ENCODE measurements at regions of chr11 and their contacts with region 1.

Region 1: GRCh38 chr11:19951558-19952115 is 208.6 kb downstream of the DBX1 start:
- DNase-seq: no peak
- ATAC-seq: peak in 2 of 4 donors; percentile 26 to 39
- H3K4me3 ChIP-seq: peak overlapping the region in 4 of 12 donors; percentile 8 to 43 (median 26)
- H3K27ac ChIP-seq: peak overlapping the region in 5 of 12 donors; percentile 2 to 44 (median 30)
- H3K4me1 ChIP-seq: peaks cover 5 to 57% (median 27%) of the 10 kb centered on the region in 12 donors
- H3K27me3 ChIP-seq: no peaks in the 10 kb centered on the region
- CTCF ChIP-seq: peak; percentile 50 to 76 (median 70)
- POLR2A ChIP-seq: no peak

Region 2: DNA sequence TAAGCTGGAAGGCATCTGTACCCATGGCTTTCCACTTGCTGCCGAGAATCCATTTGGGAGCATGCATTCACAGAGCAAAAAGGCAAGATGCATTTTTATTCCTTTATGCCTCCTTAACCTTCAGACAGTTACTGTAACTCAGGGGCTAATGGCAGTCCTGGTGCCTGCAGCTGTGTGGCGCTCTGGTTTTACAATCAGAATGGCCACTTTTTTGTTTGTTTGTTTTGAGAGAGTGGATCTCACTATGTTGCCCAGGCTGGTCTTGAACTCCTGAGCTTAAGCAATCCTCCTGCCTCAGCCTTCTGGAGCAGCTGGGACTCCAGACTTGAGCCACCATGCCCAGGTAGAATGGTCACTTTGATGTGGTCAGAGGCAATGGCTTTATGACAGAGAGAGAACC is 137.2 kb before region 1 on chr11:
- intact Hi-C with region 1: no loop called
- DNase-seq: no peak
- ATAC-seq: no peak
- H3K4me3 ChIP-seq: no peak overlapping the region
- H3K27ac ChIP-seq: peak overlapping the region in 1 of 12 donors; percentile 75
- H3K4me1 ChIP-seq: peaks cover 0 to 76% (median 40%) of the 10 kb centered on the region in 12 donors
- H3K27me3 ChIP-seq: no peaks in the 10 kb centered on the region
- CTCF ChIP-seq: no peak
- POLR2A ChIP-seq: no peak

Region 3: DNA sequence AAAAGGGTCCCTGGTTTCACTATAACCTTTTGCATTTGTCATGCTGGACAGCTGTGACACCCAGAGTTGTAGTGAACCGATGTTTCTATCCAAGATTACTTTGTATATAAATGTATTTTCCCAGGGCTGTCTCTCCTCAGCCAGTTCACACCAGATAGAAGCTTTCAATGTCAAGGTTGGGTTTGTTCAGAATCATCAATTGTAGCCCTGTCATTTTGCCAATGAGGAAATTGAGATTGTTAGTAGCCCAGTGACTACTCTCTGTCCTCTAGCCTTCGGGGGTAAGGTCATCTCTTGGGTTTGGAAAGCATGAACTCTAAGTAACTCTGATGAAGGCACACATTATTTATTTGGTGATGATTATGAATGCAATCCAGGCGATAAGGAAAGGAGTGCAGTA is 43.0 kb after region 1 on chr11:
- intact Hi-C with region 1: loop called in 1 of 10 experiments (anchors 5 kb)
- DNase-seq: no peak
- ATAC-seq: no peak
- H3K4me3 ChIP-seq: no peak overlapping the region
- H3K27ac ChIP-seq: peak overlapping the region in 9 of 12 donors; percentile 9 to 72 (median 37)
- H3K4me1 ChIP-seq: peaks cover 0 to 27% (median 12%) of the 10 kb centered on the region in 12 donors
- H3K27me3 ChIP-seq: no peaks in the 10 kb centered on the region
- CTCF ChIP-seq: no peak
- POLR2A ChIP-seq: no peak

Region 4: GRCh38 chr11:20042118-20042518 is 90.5 kb after region 1 on chr11:
- intact Hi-C with region 1: loop called in 4 of 10 experiments (anchors 5 to 10 kb)
- DNase-seq: no peak
- ATAC-seq: no peak
- H3K4me3 ChIP-seq: no peak overlapping the region
- H3K27ac ChIP-seq: peak overlapping the region in 7 of 12 donors; percentile 6 to 61 (median 17)
- H3K4me1 ChIP-seq: peaks cover 0 to 50% (median 15%) of the 10 kb centered on the region in 12 donors
- H3K27me3 ChIP-seq: no peaks in the 10 kb centered on the region
- CTCF ChIP-seq: no peak
- POLR2A ChIP-seq: no peak

Region 5: DNA sequence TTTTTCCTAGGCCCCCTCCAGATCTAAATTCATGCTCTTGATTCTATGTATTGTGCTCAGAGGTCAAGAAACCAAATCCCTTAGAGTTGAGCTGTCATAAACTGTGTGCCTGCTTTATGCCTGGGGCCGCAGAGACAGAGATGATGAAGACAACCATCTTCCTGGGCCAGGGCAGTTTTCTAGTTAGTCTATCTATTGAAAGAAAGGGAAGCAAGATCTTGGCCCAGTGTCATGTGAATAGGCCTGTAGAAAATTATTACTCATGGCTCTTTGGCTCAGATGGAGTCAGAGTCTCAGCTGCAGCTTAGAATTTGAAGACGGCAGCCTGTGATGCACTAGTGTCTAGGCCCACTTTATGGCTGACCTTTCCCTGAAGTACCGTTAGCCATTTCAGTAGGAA is 96.6 kb after region 1 on chr11:
- intact Hi-C with region 1: loop called in 4 of 10 experiments (anchors 5 to 10 kb)
- DNase-seq: no peak
- ATAC-seq: peak in 2 of 4 donors; percentile 1 to 4
- H3K4me3 ChIP-seq: peak overlapping the region; percentile 7 to 65 (median 48)
- H3K27ac ChIP-seq: peak overlapping the region; percentile 69 to 96 (median 88)
- H3K4me1 ChIP-seq: peaks cover 0 to 53% (median 15%) of the 10 kb centered on the region in 12 donors
- H3K27me3 ChIP-seq: no peaks in the 10 kb centered on the region
- CTCF ChIP-seq: no peak
- POLR2A ChIP-seq: no peak

Region 6: GRCh38 chr11:20097319-20098221 is 145.9 kb after region 1 on chr11:
- intact Hi-C with region 1: no loop called
- DNase-seq: no peak
- ATAC-seq: no peak
- H3K4me3 ChIP-seq: no peak overlapping the region
- H3K27ac ChIP-seq: peak overlapping the region in 2 of 12 donors; percentile 22 to 42
- H3K4me1 ChIP-seq: peaks cover 0 to 11% (median 0%) of the 10 kb centered on the region in 12 donors
- H3K27me3 ChIP-seq: no peaks in the 10 kb centered on the region
- CTCF ChIP-seq: no peak
- POLR2A ChIP-seq: no peak

Region 7: DNA sequence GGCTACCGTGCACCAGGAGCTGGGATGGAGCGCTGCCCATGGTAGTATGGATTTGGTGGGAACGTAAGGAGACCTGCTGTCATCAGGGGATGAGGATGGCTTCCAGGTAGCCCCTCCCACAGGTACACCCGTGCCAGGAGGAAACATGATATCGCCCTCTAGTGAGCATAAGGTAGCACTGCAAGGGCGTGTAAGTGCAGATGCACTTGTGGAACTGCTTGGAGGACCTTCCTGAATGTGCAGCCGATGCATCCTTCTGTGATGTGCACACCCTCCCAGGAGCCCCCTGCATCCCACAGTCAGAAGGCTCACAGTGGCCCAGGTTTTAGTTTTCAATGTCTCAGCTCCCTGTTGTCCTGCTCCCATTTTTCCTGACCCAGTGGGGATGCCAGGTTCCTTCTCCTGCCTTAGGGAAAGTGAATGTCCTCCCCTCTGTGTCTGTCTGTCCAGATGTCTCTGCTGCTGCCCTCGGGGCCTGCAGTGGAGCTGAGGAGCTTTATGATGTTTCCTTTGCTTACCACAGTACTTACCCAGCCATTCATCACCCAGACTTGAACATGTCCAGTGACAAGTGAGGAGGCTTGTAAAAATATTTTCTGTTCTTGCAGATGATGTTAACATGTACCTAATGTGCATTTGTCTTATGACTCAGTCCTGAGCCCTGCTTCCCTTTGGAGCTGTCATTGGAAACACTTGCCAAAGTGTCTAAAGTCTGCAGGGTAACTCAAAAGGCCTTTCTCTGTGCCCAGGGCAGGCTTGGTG is 159.5 kb after region 1 on chr11:
- intact Hi-C with region 1: loop called (anchors 2 to 5 kb)
- DNase-seq: no peak
- ATAC-seq: peak; percentile 4 to 29 (median 16)
- H3K4me3 ChIP-seq: no peak overlapping the region
- H3K27ac ChIP-seq: peak overlapping the region in 10 of 12 donors; percentile 58 to 87 (median 78)
- H3K4me1 ChIP-seq: peaks cover 0 to 26% (median 18%) of the 10 kb centered on the region in 12 donors
- H3K27me3 ChIP-seq: no peaks in the 10 kb centered on the region
- CTCF ChIP-seq: peak; percentile 70 to 87 (median 78)
- POLR2A ChIP-seq: no peak

Region 8: GRCh38 chr11:20127671-20128527 is 176.3 kb after region 1 on chr11:
- intact Hi-C with region 1: loop called (anchors 1 to 10 kb)
- DNase-seq: peak; percentile 71 to 82 (median 76)
- ATAC-seq: peak; percentile 63 to 86 (median 80)
- H3K4me3 ChIP-seq: no peak overlapping the region
- H3K27ac ChIP-seq: no peak overlapping the region
- H3K4me1 ChIP-seq: peaks cover 0 to 11% (median 4%) of the 10 kb centered on the region in 12 donors
- H3K27me3 ChIP-seq: peaks cover 0 to 13% (median 0%) of the 10 kb centered on the region in 9 donors
- CTCF ChIP-seq: peak; percentile 78 to 87 (median 83)
- POLR2A ChIP-seq: no peak

Region 9: DNA sequence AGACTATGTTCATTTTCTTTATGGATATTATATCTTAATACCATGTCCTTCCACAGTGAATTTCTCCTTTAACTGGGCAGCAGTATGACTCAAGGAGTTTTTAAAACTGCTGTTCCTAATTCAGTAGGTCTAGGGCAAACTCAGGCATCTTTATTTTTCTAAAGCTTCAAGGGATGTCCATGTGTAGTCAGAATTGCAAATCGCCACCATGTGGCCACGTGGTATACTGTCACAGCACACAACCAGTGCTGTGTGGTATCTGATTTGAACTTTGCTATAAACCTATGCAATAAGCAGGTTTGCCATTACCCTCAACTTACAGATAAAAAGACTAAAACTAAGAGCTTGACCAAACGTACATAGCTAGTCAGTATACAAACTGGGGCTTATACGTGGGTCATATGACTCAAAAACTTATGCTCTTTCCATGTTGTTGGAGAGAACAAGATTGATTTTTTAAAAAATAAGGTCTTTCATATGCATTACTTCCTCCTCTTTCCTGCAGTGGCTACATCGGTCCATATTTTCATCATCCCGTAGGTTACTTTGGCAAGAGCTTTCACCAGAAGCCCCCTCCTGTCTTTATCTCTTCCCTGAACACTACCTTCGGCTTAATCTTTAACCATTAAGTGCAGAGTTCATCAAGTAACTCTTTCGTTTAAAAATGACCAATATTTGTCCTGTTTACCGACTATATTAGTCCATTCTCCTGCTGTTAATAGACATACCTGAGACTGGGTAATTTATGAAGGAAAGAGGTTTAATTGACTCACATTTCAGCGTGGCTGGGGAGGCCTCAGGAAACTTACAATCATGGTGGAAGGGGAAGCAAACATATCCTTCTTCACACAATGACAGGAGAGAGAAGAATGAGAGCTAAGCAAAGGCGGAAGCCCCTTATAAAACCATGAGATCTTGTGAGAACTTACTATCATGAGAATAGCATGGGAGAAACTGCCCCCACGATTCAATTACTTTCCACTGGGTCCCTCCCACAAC is 403.9 kb after region 1 on chr11:
- intact Hi-C with region 1: loop called in 9 of 10 experiments (anchors 2 to 10 kb)
- DNase-seq: peak in 1 of 5 donors; percentile 28
- ATAC-seq: peak in 3 of 4 donors; percentile 48 to 75 (median 53)
- H3K4me3 ChIP-seq: no peak overlapping the region
- H3K27ac ChIP-seq: no peak overlapping the region
- H3K4me1 ChIP-seq: peaks cover 0 to 4% (median 0%) of the 10 kb centered on the region in 12 donors
- H3K27me3 ChIP-seq: peaks cover 0 to 2% (median 0%) of the 10 kb centered on the region in 9 donors
- CTCF ChIP-seq: peak; percentile 31 to 68 (median 43)
- POLR2A ChIP-seq: no peak